Naive thymus-derived CD4-positive, alpha-beta T cell (primary cell): ENCODE measurements at regions of chr4 and their contacts with region 1.

Region 1: DNA sequence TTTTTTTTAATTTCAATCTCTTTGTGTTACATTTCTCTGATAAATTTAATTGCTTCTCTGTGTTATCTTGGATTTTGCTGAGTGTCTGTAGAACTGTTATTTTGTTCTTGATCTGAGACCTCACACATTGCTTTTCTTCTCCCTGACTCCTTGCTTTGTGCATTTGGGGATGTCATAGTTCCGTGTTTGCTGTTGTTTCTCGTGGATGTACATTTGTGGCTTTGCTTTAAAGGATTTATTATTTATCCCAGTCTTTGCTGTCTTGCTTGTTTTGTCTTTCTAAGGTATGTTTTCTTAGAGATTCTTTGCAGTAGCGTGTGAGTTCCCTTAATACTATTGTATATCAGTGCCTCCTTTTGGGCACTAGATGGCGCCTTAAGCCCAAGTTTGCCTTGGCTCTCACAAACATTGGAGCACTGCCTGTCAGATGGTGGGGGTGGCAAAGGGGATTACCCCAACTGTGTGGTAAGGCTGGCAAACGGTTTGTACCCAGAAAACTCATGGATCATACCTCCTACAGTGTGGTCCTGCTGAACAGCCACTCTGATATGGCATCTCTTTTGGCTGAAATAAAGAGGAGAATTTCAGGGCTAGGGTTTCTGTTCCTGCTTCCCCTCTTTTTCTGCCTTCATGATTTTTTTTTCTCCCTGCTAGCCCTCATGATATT is 96.4 kb downstream of the PGRMC2 start:
- DNase-seq: peak; percentile 29 to 70 (median 61)
- ATAC-seq: peak; percentile 98
- H3K4me3 ChIP-seq: no peak overlapping the region
- H3K4me3 Mint-ChIP-seq: no peak overlapping the region
- H3K27ac ChIP-seq: no peak overlapping the region
- H3K27ac Mint-ChIP-seq: no peak overlapping the region
- H3K4me1 ChIP-seq: no peaks in the 10 kb centered on the region
- H3K4me1 Mint-ChIP-seq: peaks cover 2 to 11% (median 6%) of the 10 kb centered on the region in 7 donors
- H3K27me3 ChIP-seq: no peaks in the 10 kb centered on the region
- H3K27me3 Mint-ChIP-seq: no peaks in the 10 kb centered on the region

Region 2: DNA sequence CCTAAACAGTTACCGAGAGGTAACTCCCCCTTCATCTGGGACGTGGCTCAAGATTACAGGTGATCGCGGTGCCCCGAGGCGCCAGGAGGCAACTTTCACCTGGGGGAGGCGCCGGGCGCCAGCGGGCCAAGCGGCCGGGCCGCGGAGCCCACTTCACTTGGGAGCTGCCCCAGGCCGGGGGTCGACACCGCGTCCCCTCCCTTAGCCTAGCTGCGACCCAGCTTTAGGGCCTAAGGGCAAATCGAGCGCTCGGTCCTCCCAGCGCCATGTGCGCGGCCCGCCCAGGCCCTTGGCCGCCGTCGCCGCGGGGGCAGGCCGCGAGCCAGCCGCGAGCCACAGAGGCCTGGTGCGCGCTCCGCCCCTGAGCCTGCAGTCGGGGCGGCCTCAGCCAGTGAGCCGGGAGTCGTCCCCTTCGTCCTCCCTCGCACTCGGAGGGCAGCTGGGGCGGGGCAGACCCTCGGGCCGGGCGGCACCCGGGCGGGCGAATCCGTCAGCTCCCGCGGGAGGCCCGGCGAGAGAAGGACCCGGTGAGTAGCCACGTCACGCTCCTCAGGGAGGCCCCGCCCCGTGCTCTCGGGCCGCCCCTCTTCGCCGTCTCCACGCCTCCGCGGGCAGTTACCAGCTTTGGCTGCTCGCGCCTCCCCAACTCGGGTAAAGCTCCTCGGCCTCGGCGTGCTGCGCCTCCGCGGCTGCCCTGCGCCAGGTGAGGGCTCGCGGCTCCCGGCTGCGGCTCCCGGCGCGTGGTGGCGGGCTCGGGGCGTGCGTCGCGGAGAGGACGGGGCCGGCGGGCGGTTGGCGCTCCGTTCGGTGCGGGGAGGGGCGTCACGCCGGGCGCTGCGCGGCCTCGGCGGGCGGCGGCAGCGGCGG is 130.3 kb before region 1 on chr4 and contains the start of gene LARP1B:
- CTCF ChIA-PET with region 1: no interaction called
- POLR2A ChIA-PET with region 1: no interaction called
- intact Hi-C with region 1: no loop called
- DNase-seq: peak; percentile 83 to 96 (median 89)
- ATAC-seq: peak; percentile 93
- H3K4me3 ChIP-seq: peak within 1 kb of the TSS; percentile 74
- H3K4me3 Mint-ChIP-seq: peak within 1 kb of the TSS; percentile 82 to 91 (median 88)
- H3K27ac ChIP-seq: peak within 1 kb of the TSS; percentile 90
- H3K27ac Mint-ChIP-seq: peak within 1 kb of the TSS; percentile 87 to 94 (median 91)
- H3K4me1 ChIP-seq: peaks cover 0 to 5% of the 10 kb centered on the region in 2 donors
- H3K4me1 Mint-ChIP-seq: peaks cover 0 to 16% (median 10%) of the 10 kb centered on the region in 7 donors
- H3K27me3 ChIP-seq: no peaks in the 10 kb centered on the region
- H3K27me3 Mint-ChIP-seq: peaks cover 0 to 2% (median 0%) of the 10 kb centered on the region in 5 donors
- total RNA-seq, gene LARP1B: 9.5 to 18.2 (median 13.7) TPM

Region 3: DNA sequence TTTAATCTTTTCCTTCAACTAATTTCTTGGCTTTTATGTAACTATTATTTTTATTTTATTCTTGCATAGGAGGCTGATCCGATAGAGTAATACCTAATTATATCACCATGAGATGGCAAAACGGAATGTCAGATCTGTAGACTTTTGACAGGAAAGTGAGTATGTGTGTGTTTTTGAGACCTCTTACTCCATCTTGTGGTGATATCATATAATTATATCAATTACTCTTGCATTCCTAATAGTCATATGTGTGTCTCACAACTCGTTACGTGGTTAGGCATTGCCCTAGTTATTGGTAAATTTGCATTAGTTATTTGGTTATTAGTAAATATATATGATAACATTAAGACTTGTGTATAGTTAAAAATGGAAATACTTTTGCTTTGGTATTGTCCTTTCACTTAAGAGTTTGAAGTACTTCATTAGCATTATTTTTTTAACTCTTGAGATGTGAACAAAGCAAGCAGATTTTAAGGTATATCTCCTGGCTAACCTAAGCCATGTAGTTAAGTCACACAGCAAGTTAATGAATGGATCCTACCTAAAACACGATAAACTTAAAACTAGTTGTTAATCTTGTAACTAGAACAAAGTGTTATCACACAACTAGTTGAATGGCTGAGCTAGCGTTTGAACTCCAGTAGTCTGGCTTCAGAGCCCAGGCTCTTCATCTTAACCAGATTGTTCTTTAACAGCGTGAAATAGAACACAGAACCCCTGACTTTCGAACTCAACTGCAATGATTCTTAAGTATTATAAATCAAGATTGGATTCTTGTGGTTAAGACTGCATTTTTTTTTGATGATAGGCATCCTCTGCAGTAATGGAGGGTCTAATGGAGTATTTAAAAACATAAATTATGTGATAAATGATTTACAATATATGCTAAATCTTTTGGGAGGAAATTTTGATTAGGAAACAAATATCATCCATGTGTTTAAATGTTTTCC is 29.3 kb after region 1 on chr4:
- CTCF ChIA-PET with region 1: interaction called, 7 read pairs
- POLR2A ChIA-PET with region 1: no interaction called
- intact Hi-C with region 1: loop called in 1 of 2 experiments (anchors 2 kb)
- DNase-seq: peak in 3 of 9 donors; percentile 10 to 23 (median 15)
- ATAC-seq: peak; percentile 29
- H3K4me3 ChIP-seq: no peak overlapping the region
- H3K4me3 Mint-ChIP-seq: no peak overlapping the region
- H3K27ac ChIP-seq: no peak overlapping the region
- H3K27ac Mint-ChIP-seq: no peak overlapping the region
- H3K4me1 ChIP-seq: no peaks in the 10 kb centered on the region
- H3K4me1 Mint-ChIP-seq: no peaks in the 10 kb centered on the region
- H3K27me3 ChIP-seq: no peaks in the 10 kb centered on the region
- H3K27me3 Mint-ChIP-seq: no peaks in the 10 kb centered on the region

Region 4: GRCh38 chr4:128379860-128380259 is 188.6 kb after region 1 on chr4:
- CTCF ChIA-PET with region 1: no interaction called
- POLR2A ChIA-PET with region 1: no interaction called
- intact Hi-C with region 1: loop called in 1 of 2 experiments (anchors 1 kb)
- DNase-seq: no peak
- ATAC-seq: no peak
- H3K4me3 ChIP-seq: no peak overlapping the region
- H3K4me3 Mint-ChIP-seq: no peak overlapping the region
- H3K27ac ChIP-seq: no peak overlapping the region
- H3K27ac Mint-ChIP-seq: no peak overlapping the region
- H3K4me1 ChIP-seq: no peaks in the 10 kb centered on the region
- H3K4me1 Mint-ChIP-seq: peaks cover 0 to 2% (median 0%) of the 10 kb centered on the region in 7 donors
- H3K27me3 ChIP-seq: no peaks in the 10 kb centered on the region
- H3K27me3 Mint-ChIP-seq: no peaks in the 10 kb centered on the region

Region 5: DNA sequence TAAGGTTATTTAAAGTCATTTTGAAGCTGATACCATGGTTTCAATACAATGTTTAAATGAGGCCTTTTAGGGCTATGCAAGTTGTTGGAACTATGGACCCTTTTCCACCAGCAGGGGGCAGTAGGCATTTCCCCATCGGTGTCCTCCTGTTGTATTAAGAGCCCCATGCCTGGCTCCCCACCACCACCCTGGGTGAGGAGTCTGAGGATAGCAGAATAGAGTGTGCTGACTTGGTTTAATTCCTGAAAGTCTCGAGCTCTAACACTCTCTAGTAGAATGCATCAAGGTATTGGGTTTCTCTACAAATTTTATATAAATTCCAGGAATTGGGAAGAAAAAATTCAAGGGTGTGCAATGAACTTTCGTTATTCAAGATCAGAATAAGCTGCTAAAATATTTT is 383.5 kb after region 1 on chr4:
- CTCF ChIA-PET with region 1: no interaction called
- POLR2A ChIA-PET with region 1: no interaction called
- intact Hi-C with region 1: loop called in 1 of 2 experiments (anchors 2 kb)
- DNase-seq: peak; percentile 16 to 64 (median 51)
- ATAC-seq: peak; percentile 67
- H3K4me3 ChIP-seq: no peak overlapping the region
- H3K4me3 Mint-ChIP-seq: no peak overlapping the region
- H3K27ac ChIP-seq: no peak overlapping the region
- H3K27ac Mint-ChIP-seq: no peak overlapping the region
- H3K4me1 ChIP-seq: no peaks in the 10 kb centered on the region
- H3K4me1 Mint-ChIP-seq: no peaks in the 10 kb centered on the region
- H3K27me3 ChIP-seq: no peaks in the 10 kb centered on the region
- H3K27me3 Mint-ChIP-seq: peaks cover 0 to 16% (median 12%) of the 10 kb centered on the region in 5 donors

Region 6: DNA sequence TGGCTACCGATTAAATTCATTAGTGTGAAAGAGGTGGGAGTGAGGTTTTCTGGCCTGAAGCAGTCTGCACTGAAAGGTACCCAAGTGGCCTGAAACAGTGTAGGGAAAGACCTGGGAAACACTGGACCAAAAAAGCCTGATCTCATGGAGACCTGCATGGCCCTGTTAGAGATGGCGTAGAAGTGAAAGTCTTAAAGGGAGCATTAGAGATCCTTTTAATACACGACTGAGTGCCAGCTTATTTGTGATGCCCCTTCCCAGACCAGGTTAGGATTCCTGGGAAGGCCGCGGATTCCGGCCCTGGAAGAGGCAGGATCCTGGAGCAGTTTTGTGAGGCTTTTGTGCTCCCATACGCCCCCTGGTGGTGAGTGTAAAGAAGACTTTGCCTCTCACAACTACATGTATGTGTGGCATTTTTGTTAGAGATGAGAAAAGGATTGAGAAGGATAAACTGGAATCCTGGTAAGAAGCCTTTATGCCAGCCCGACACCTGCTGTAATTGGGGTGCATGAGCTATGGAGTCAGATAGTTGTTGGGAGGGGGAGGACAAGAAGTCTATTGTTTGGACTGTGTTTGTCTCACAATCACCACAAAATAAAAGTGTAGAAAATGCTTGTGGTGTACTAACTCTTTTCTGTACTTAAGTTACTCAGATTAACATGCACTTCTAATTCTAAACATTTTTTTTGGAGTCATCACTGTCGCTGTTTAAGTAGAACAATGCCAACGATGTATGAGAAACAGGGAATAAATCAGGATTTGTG is 672.2 kb after region 1 on chr4:
- CTCF ChIA-PET with region 1: no interaction called
- POLR2A ChIA-PET with region 1: no interaction called
- intact Hi-C with region 1: loop called (anchors 1 kb)
- DNase-seq: peak; percentile 37 to 74 (median 60)
- ATAC-seq: peak; percentile 73
- H3K4me3 ChIP-seq: no peak overlapping the region
- H3K4me3 Mint-ChIP-seq: peak overlapping the region in 5 of 10 donors; percentile 2 to 55 (median 17)
- H3K27ac ChIP-seq: peak overlapping the region; percentile 58
- H3K27ac Mint-ChIP-seq: peak overlapping the region in 8 of 9 donors; percentile 59 to 91 (median 82)
- H3K4me1 ChIP-seq: peaks cover 21 to 22% of the 10 kb centered on the region in 2 donors
- H3K4me1 Mint-ChIP-seq: peaks cover 20 to 49% (median 45%) of the 10 kb centered on the region in 7 donors
- H3K27me3 ChIP-seq: no peaks in the 10 kb centered on the region
- H3K27me3 Mint-ChIP-seq: no peaks in the 10 kb centered on the region

Region 7: DNA sequence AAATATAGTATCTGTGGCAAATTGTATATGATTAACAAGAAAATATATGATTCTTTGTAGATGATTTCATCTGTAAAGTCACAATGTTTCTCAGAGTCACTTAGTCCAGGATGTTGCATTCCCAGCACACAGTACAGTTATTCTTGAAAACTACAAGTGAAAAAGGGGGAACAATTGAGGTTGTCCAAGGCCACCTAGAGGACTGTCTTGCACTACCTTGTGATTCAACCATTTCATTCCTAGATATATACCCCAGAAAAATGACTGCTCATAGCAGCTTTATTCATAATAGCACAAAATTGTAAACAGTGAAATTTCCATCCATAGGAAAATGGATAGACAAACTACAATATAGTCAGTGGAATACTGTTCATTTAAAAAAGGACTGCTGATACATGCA is 920.7 kb after region 1 on chr4:
- CTCF ChIA-PET with region 1: no interaction called
- POLR2A ChIA-PET with region 1: no interaction called
- intact Hi-C with region 1: loop called in 1 of 2 experiments (anchors 1 kb)
- DNase-seq: no peak
- ATAC-seq: no peak
- H3K4me3 ChIP-seq: no peak overlapping the region
- H3K4me3 Mint-ChIP-seq: no peak overlapping the region
- H3K27ac ChIP-seq: no peak overlapping the region
- H3K27ac Mint-ChIP-seq: no peak overlapping the region
- H3K4me1 ChIP-seq: no peaks in the 10 kb centered on the region
- H3K4me1 Mint-ChIP-seq: no peaks in the 10 kb centered on the region
- H3K27me3 ChIP-seq: no peaks in the 10 kb centered on the region
- H3K27me3 Mint-ChIP-seq: no peaks in the 10 kb centered on the region